Lower leg skin (tissue), 4 donors: ENCODE measurements at regions of chrX and their contacts with region 1.

Region 1: DNA sequence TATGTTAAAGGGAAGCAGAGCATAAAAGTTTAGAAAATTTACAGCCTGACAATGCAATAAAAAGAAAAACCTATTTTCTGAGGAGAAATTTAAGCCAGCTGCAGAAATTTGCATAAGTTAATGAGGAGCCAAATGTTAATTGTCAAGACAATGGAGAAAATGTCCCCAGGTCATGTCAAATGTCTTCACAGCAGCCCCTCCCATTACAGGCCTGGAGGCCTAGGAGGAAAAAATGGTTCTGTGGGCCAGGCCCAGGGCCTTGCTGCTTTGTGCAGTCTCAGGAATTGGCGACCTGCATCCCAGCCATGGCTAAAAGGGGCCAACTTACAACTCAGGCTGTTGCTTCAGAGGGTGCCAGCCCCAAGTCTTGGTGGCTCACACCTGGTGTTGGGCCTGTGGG is 275.4 kb upstream of the RPS6KA3 start:
- DNase-seq: no peak
- H3K4me3 ChIP-seq: no peak overlapping the region
- CTCF ChIP-seq: no peak
- POLR2A ChIP-seq: no peak

Region 2: DNA sequence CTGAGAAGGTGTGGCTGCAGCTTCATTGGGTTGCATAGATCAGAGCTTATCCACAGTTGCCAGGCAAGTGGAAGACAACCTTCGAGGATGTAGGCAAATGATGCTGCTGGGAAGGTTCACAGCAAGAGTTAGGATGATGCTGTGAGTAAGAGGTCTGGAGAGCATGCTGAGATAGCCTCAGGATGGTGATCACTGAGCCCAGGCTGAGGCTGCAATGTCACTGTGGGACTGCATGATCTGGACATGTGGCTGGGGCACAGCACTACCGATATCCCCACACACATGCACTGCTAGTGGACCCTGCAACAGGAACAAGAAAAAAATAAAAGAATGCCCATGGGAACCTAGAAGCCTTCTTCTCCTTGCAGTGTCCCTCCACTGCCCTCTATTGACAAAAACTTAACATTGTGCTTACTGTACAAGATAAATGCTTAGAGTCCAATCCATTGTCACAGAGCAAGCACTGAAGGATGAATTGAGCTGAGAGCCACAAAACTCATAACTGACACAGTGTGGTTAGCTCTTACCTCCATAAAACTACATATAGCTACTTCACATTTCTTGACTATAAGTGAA is 937.7 kb after region 1 on chrX:
- intact Hi-C with region 1: loop called (anchors 5 kb)
- DNase-seq: no peak
- H3K4me3 ChIP-seq: no peak overlapping the region
- CTCF ChIP-seq: no peak
- POLR2A ChIP-seq: no peak